ENCODE measurements at regions of chr14 and their contacts with region 1.

Region 1: DNA sequence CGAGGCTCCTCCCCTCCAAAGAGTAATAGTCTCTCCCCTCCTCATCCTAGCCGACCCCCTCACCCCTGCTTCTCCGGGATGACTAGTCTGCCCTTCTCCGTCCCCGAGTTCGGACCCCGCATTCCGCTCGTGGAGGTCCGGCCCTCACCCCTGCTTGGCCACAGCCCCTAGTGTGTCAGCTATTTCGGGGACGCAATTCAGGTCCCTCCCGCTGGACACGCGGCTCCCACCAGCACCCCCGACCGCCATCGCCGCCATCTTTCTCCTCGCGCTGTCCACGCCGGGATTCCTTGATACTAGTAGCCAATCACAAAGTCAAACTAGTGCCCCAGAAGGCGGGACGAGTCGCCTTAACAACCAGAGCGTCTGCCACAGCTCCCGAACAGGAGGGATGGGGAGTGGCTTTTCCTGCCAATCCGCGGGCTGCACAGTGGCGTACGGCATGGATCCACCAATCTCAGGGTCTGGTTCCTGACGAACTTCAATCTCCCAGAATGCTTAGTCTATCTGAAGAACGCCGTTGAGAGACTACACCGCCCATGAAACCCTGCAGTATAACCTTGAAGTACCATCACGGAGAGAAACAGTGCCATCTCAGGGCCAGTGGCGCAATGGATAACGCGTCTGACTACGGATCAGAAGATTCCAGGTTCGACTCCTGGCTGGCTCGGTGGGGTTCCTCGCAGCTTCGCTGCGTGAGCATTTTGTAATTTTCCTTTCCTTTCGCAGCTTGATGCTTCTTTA is at the start of gene PRMT5:
- DNase-seq: peak; percentile 99
- ATAC-seq: peak; percentile 90
- H3K4me3 ChIP-seq: peak within 1 kb of the TSS; percentile 90
- H3K27ac ChIP-seq: peak within 1 kb of the TSS; percentile 54
- H3K4me1 ChIP-seq: peaks cover 30% of the 10 kb centered on the region
- H3K27me3 ChIP-seq: no peaks in the 10 kb centered on the region
- CTCF ChIP-seq: no peak
- total RNA-seq, gene PRMT5: 101 and 113 TPM in 2 replicates

Region 2: DNA sequence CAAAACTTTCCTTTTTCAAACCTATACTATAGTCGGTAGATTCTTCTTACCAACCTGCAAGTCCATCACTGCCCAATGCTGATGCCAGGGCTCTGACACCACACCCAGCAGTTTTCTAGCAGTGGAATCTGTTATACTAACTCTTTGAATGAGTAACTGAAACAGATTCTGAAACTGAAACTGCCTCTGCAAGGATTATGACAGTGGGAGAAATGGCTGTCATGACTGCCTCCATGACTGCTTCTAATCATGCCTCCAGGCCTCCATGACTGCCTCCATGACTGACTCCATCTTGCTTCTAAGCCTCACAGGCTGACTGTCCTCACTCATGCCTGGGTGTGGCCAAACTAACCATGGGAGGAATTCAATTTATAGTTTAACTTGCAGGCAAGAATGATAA is 192.2 kb before region 1 on chr14:
- CTCF ChIA-PET with region 1: no interaction called
- POLR2A ChIA-PET with region 1: no interaction called
- intact Hi-C with region 1: no loop called
- DNase-seq: no peak
- ATAC-seq: no peak
- H3K4me3 ChIP-seq: no peak overlapping the region
- H3K27ac ChIP-seq: no peak overlapping the region
- H3K4me1 ChIP-seq: no peaks in the 10 kb centered on the region
- H3K27me3 ChIP-seq: no peaks in the 10 kb centered on the region
- CTCF ChIP-seq: no peak

Region 3: GRCh38 chr14:22955702-22956569 is 26.7 kb after region 1 on chr14:
- CTCF ChIA-PET with region 1: interaction called, 11 read pairs
- POLR2A ChIA-PET with region 1: interaction called, 3 read pairs
- intact Hi-C with region 1: loop called (anchors 1 kb)
- DNase-seq: peak; percentile 70
- ATAC-seq: no peak
- H3K4me3 ChIP-seq: peak overlapping the region; percentile 84
- H3K27ac ChIP-seq: peak overlapping the region; percentile 78
- H3K4me1 ChIP-seq: peaks cover 12% of the 10 kb centered on the region
- H3K27me3 ChIP-seq: no peaks in the 10 kb centered on the region
- CTCF ChIP-seq: no peak

Measured in PC-3 (cell line).